K562 (cell line): ENCODE measurements at regions of chr4 and their contacts with region 1.

Region 1: GRCh38 chr4:112523764-112524505 is 8.0 kb upstream of the NEUROG2 start:
- DNase-seq: peak; percentile 73 to 80 (median 77)
- ATAC-seq: peak; percentile 94
- H3K4me3 ChIP-seq: peak overlapping the region; percentile 35
- H3K27ac ChIP-seq: no peak overlapping the region
- H3K4me1 ChIP-seq: peaks cover 0 to 12% of the 10 kb centered on the region in 2 experiments; a peak in 3 of 5 replicates
- H3K27me3 ChIP-seq: peaks cover 26 to 34% of the 10 kb centered on the region in 2 experiments
- CTCF ChIP-seq: peak; percentile 81 to 96 (median 87)
- EP300 ChIP-seq: no peak
- POLR2A ChIP-seq: no peak
- RAD21 ChIP-seq: peak; percentile 79 to 83

Region 2: GRCh38 chr4:112099701-112100297 is 424.1 kb before region 1 on chr4:
- CTCF ChIA-PET with region 1: interaction called, 8 read pairs
- POLR2A ChIA-PET with region 1: no interaction called
- in situ Hi-C with region 1: loop called (anchors 10 kb)
- intact Hi-C with region 1: loop called (anchors 1 kb)
- DNase-seq: peak; percentile 30 to 51 (median 35)
- ATAC-seq: peak; percentile 95
- H3K4me3 ChIP-seq: no peak overlapping the region
- H3K27ac ChIP-seq: no peak overlapping the region
- H3K4me1 ChIP-seq: no peaks in the 10 kb centered on the region
- H3K27me3 ChIP-seq: no peaks in the 10 kb centered on the region; a peak in 1 of 5 replicates
- CTCF ChIP-seq: peak; percentile 43 to 81 (median 49); a peak in 3 of 6 replicates
- EP300 ChIP-seq: no peak
- POLR2A ChIP-seq: no peak
- RAD21 ChIP-seq: peak; percentile 88 to 89

Region 3: DNA sequence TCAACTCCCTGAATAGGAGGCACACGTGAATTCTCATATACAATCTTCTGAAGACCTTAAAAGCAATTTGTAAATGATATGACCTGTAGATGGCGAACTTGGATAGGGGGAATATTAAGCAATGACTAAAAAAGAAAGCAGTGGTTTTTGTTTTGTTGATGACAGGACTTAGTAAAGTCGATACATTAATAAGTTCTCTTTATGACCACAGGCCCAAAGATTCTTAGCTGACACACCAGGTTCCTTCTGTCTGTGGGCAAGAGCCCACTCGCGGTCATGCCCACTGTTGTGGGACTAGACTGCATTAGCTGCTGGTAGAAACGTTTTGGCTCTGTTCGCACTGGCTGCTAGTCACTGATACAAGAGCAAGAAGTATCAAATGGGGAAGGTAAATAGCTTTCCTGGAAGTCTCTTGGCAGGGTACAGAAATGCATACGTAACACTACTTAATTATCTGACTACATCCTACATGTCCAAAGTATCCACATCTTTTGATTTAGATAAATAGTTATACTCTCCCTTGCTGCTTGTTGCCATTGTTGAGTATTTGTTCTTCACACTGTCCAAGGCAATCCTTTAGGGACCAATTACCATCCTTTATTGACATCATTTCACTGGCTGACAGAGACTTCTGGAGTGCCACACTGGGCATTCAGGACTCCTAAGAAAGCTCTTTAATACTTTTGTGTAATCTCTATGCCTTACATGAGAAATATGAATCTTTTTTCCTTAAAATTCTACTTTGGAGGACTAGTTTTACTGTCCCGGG is 195.8 kb before region 1 on chr4:
- CTCF ChIA-PET with region 1: interaction called, 9 read pairs
- POLR2A ChIA-PET with region 1: no interaction called
- in situ Hi-C with region 1: no loop called
- intact Hi-C with region 1: loop called (anchors 1 kb)
- DNase-seq: peak in 2 of 4 experiments; percentile 8 to 37
- ATAC-seq: peak; percentile 54; the same call in 2 of the 3 replicates
- H3K4me3 ChIP-seq: no peak overlapping the region
- H3K27ac ChIP-seq: no peak overlapping the region
- H3K4me1 ChIP-seq: no peaks in the 10 kb centered on the region
- H3K27me3 ChIP-seq: no peaks in the 10 kb centered on the region
- CTCF ChIP-seq: peak; percentile 24 to 62 (median 34); a peak in 3 of 6 replicates
- EP300 ChIP-seq: no peak
- POLR2A ChIP-seq: no peak
- RAD21 ChIP-seq: peak; percentile 44 to 51

Region 4: GRCh38 chr4:112604589-112604988 is 80.7 kb after region 1 on chr4:
- CTCF ChIA-PET with region 1: no interaction called
- POLR2A ChIA-PET with region 1: no interaction called
- in situ Hi-C with region 1: no loop called
- intact Hi-C with region 1: loop called (anchors 1 kb)
- DNase-seq: peak; percentile 36 to 60 (median 46)
- ATAC-seq: peak; percentile 95
- H3K4me3 ChIP-seq: no peak overlapping the region
- H3K27ac ChIP-seq: no peak overlapping the region
- H3K4me1 ChIP-seq: no peaks in the 10 kb centered on the region; a peak in 1 of 5 replicates
- H3K27me3 ChIP-seq: no peaks in the 10 kb centered on the region
- CTCF ChIP-seq: peak; percentile 53 to 77 (median 64); a peak in 4 of 6 replicates
- EP300 ChIP-seq: no peak
- POLR2A ChIP-seq: no peak
- RAD21 ChIP-seq: peak; percentile 70 to 75